Endothelial cell of umbilical vein (primary cell): ENCODE measurements at regions of chr19 and their contacts with region 1.

Region 1: GRCh38 chr19:46840136-46840942 is 10.3 kb downstream of the AP2S1 start:
- DNase-seq: peak; percentile 64
- H3K4me3 ChIP-seq: no peak overlapping the region
- H3K27ac ChIP-seq: no peak overlapping the region
- H3K4me1 ChIP-seq: no peaks in the 10 kb centered on the region
- H3K27me3 ChIP-seq: no peaks in the 10 kb centered on the region
- CTCF ChIP-seq: peak; percentile 65 to 83
- POLR2A ChIP-seq: no peak

Region 2: DNA sequence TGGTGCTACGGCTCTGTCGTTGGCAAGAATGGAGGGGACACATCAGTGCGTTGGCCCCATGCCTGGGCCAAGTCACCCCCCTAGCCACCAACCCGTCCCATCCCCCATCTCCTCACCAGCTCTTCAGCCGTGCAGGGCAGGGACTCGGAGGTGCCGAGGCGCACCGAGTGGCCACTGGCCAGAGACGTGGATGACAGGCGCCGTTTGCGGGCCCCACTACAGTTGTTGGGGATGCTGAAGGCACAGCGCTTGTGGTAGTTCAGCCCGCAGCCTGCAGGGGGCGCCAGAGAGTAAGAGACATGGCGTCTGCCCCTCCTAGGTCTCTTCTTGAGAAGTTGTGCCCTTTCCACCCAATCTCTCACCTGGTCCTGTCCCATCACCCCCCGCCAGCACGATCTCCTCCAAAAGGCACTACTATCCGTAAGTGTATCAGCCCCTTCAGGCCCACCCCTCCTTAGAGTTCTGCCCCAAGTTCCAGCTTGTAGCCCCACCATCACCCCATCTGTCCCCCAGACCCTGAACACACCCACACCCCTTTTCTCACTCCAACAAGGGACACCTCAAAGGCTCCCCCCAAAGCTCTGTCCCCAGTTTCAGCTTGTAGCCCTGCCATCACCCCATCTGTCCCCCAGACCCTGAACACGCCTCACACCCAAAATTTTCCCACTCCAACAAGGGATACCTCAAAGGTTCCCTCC is 135.8 kb before region 1 on chr19:
- CTCF ChIA-PET with region 1: interaction called, 11 read pairs
- POLR2A ChIA-PET with region 1: no interaction called
- dilution Hi-C with region 1: no loop called
- intact Hi-C with region 1: no loop called
- DNase-seq: peak; percentile 64
- H3K4me3 ChIP-seq: no peak overlapping the region
- H3K27ac ChIP-seq: no peak overlapping the region
- H3K4me1 ChIP-seq: no peaks in the 10 kb centered on the region
- H3K27me3 ChIP-seq: no peaks in the 10 kb centered on the region
- CTCF ChIP-seq: peak; percentile 95 to 98
- POLR2A ChIP-seq: peak; percentile 26

Region 3: GRCh38 chr19:46746281-46747013 is 93.9 kb before region 1 on chr19 and contains the start of gene STRN4:
- CTCF ChIA-PET with region 1: interaction called, 46 read pairs
- POLR2A ChIA-PET with region 1: no interaction called
- dilution Hi-C with region 1: no loop called
- intact Hi-C with region 1: loop called (anchors 1 kb)
- DNase-seq: no peak
- H3K4me3 ChIP-seq: peak within 1 kb of the TSS; percentile 80 to 86 (median 85)
- H3K27ac ChIP-seq: peak within 1 kb of the TSS; percentile 54
- H3K4me1 ChIP-seq: peaks cover 13% of the 10 kb centered on the region
- H3K27me3 ChIP-seq: no peaks in the 10 kb centered on the region
- CTCF ChIP-seq: no peak
- POLR2A ChIP-seq: peak; percentile 28
- total RNA-seq, gene STRN4: 108 and 116 TPM in 2 replicates

Region 4: DNA sequence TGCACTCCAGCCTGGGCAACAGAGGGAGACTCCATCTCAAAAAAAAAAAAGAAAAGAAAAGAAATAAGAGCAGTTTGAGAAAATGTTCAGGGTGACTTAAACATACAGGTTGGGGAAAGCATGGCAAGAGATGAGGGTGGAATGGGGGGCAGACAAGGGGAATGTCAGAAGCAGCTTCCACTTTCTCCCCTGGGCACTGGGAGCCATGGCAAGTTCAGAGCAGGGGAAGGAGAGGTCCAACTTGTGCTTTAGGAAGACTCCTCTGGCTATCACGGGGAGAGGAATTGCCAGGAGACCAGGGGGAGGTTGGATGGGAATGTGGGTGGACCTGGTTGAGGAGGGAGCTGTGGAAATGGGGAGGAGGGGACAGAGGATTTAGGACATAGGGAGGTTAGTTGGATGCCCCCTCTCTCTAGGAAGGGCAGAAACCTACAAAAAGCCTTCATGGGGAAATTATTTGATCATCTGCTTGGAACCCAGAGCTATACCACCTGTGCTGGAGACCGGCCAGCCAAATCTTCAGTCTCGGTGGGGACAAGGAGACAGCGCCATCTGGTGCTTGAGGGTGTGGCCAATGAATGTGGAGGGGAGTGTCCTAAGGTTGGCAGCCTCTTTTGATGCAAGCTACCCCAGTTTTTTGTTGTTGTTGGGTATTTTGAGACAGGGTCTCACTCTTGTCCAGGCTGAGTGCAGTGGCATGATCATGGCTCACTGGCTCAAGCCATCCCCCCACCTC is 86.8 kb before region 1 on chr19:
- CTCF ChIA-PET with region 1: interaction called, 128 read pairs
- POLR2A ChIA-PET with region 1: no interaction called
- dilution Hi-C with region 1: no loop called
- intact Hi-C with region 1: loop called (anchors 1 kb)
- DNase-seq: peak; percentile 41
- H3K4me3 ChIP-seq: no peak overlapping the region
- H3K27ac ChIP-seq: no peak overlapping the region
- H3K4me1 ChIP-seq: peaks cover 27% of the 10 kb centered on the region
- H3K27me3 ChIP-seq: no peaks in the 10 kb centered on the region
- CTCF ChIP-seq: peak; percentile 47 to 53
- POLR2A ChIP-seq: no peak

Region 5: GRCh38 chr19:46766569-46767317 is 73.6 kb before region 1 on chr19:
- CTCF ChIA-PET with region 1: interaction called, 56 read pairs
- POLR2A ChIA-PET with region 1: no interaction called
- dilution Hi-C with region 1: no loop called
- intact Hi-C with region 1: no loop called
- DNase-seq: peak; percentile 27
- H3K4me3 ChIP-seq: no peak overlapping the region
- H3K27ac ChIP-seq: no peak overlapping the region
- H3K4me1 ChIP-seq: no peaks in the 10 kb centered on the region
- H3K27me3 ChIP-seq: no peaks in the 10 kb centered on the region
- CTCF ChIP-seq: peak; percentile 85
- POLR2A ChIP-seq: no peak

Region 6: GRCh38 chr19:46788262-46788967 is 51.9 kb before region 1 on chr19 and contains the start of gene SLC1A5:
- CTCF ChIA-PET with region 1: interaction called, 63 read pairs
- POLR2A ChIA-PET with region 1: no interaction called
- dilution Hi-C with region 1: no loop called
- intact Hi-C with region 1: loop called (anchors 1 kb)
- DNase-seq: peak; percentile 96
- H3K4me3 ChIP-seq: peak within 1 kb of the TSS; percentile 60 to 99 (median 89)
- H3K27ac ChIP-seq: peak within 1 kb of the TSS; percentile 98
- H3K4me1 ChIP-seq: peaks cover 33% of the 10 kb centered on the region
- H3K27me3 ChIP-seq: no peaks in the 10 kb centered on the region
- CTCF ChIP-seq: no peak
- POLR2A ChIP-seq: peak; percentile 100
- total RNA-seq, gene SLC1A5: 105 and 114 TPM in 2 replicates

Region 7: GRCh38 chr19:46821498-46822409 is 18.6 kb before region 1 on chr19:
- CTCF ChIA-PET with region 1: interaction called, 11 read pairs
- POLR2A ChIA-PET with region 1: interaction called, 6 read pairs
- dilution Hi-C with region 1: no loop called
- intact Hi-C with region 1: no loop called
- DNase-seq: no peak
- H3K4me3 ChIP-seq: no peak overlapping the region
- H3K27ac ChIP-seq: no peak overlapping the region
- H3K4me1 ChIP-seq: no peaks in the 10 kb centered on the region
- H3K27me3 ChIP-seq: no peaks in the 10 kb centered on the region
- CTCF ChIP-seq: no peak
- POLR2A ChIP-seq: no peak

Region 8: DNA sequence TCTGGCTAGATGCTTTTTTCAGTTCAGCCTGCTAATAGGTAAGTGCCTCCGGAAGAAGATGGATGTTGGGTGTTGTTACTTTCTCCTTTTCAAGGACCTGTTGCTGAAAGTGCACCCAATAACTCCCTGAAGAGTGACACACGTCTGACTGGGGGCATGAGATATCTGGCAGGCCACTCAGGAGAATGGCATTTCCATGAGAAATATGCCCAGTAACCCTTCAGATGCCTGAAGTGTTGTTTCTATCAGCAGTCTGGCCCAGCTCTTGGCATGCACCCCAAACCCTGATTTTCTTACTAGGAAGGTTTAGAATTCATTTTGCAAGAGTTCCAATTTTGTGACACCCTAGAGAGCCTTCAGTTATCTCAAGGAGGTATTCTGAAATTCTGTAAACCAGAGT is 92.0 kb after region 1 on chr19:
- CTCF ChIA-PET with region 1: no interaction called
- POLR2A ChIA-PET with region 1: no interaction called
- dilution Hi-C with region 1: no loop called
- intact Hi-C with region 1: no loop called
- DNase-seq: peak; percentile 70
- H3K4me3 ChIP-seq: no peak overlapping the region
- H3K27ac ChIP-seq: peak overlapping the region; percentile 40
- H3K4me1 ChIP-seq: peaks cover 45% of the 10 kb centered on the region
- H3K27me3 ChIP-seq: no peaks in the 10 kb centered on the region
- CTCF ChIP-seq: no peak
- POLR2A ChIP-seq: no peak